H1 (cell line): ENCODE measurements at regions of chr6 and their contacts with region 1.

Region 1: DNA sequence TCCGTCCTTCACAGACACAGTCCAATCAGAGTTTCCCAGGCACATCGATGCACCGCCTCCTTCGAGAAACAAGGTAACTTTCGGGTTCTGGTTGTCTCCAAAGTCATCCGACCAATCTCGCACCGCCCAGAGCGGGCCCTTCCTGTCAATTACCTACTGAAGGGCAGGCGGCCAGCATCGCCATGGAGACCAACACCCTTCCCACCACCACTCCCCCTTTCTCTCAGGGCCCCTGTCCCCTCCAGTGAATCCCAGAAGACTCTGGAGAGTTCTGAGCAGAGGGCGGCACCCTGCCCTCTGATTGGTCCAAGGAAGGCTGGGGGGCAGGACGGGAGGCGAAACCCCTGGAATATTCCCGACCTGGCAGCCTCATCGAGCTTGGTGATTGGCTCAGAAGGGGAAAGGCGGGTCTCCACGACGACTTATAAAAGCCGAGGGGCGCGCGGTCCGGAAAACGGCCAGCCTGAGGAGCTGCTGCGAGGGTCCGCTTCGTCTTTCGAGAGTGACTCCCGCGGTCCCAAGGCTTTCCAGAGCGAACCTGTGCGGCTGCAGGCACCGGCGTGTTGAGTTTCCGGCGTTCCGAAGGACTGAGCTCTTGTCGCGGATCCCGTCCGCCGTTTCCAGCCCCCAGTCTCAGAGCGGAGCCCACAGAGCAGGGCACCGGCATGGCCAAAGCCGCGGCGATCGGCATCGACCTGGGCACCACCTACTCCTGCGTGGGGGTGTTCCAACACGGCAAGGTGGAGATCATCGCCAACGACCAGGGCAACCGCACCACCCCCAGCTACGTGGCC is at the start of gene HSPA1B:
- DNase-seq: peak; percentile 98
- H3K4me3 ChIP-seq: peak within 1 kb of the TSS; percentile 55 to 75 (median 72)
- H3K27ac ChIP-seq: peak within 1 kb of the TSS; percentile 77
- H3K4me1 ChIP-seq: peaks cover 5 to 12% (median 9%) of the 10 kb centered on the region in 4 experiments; a peak in 6 of 7 replicates
- H3K27me3 ChIP-seq: no peaks in the 10 kb centered on the region
- CTCF ChIP-seq: no peak
- EP300 ChIP-seq: no peak
- POLR2A ChIP-seq: peak; percentile 99 to 100
- RAD21 ChIP-seq: no peak
- total RNA-seq, gene HSPA1B: 76.6 and 89.3 TPM in 2 replicates

Region 2: GRCh38 chr6:31614075-31614619 is 213.3 kb before region 1 on chr6:
- CTCF ChIA-PET with region 1: no interaction called
- POLR2A ChIA-PET with region 1: no interaction called
- DNase-seq: no peak
- H3K4me3 ChIP-seq: no peak overlapping the region
- H3K27ac ChIP-seq: no peak overlapping the region
- H3K4me1 ChIP-seq: peaks cover 2 to 12% (median 6%) of the 10 kb centered on the region in 4 experiments; a peak in 6 of 7 replicates
- H3K27me3 ChIP-seq: no peaks in the 10 kb centered on the region
- CTCF ChIP-seq: no peak
- EP300 ChIP-seq: no peak
- POLR2A ChIP-seq: no peak
- RAD21 ChIP-seq: no peak

Region 3: GRCh38 chr6:31680840-31681671 is 146.4 kb before region 1 on chr6 and contains the start of gene LY6G5C:
- CTCF ChIA-PET with region 1: interaction called, 11 read pairs
- POLR2A ChIA-PET with region 1: interaction called, 4 read pairs
- DNase-seq: peak in 1 of 2 experiments; percentile 79
- H3K4me3 ChIP-seq: peak within 1 kb of the TSS; percentile 22 to 70 (median 60)
- H3K27ac ChIP-seq: no peak within 1 kb of the TSS
- H3K4me1 ChIP-seq: peaks cover 0 to 10% (median 7%) of the 10 kb centered on the region in 4 experiments; a peak in 5 of 7 replicates
- H3K27me3 ChIP-seq: peaks cover 3 to 13% (median 12%) of the 10 kb centered on the region in 4 experiments; a peak in 6 of 7 replicates
- CTCF ChIP-seq: peak; percentile 78 to 85 (median 83)
- EP300 ChIP-seq: no peak
- POLR2A ChIP-seq: no peak
- RAD21 ChIP-seq: peak; percentile 90 to 96
- total RNA-seq, gene LY6G5C: 1.1 and 1.2 TPM in 2 replicates

Region 4: DNA sequence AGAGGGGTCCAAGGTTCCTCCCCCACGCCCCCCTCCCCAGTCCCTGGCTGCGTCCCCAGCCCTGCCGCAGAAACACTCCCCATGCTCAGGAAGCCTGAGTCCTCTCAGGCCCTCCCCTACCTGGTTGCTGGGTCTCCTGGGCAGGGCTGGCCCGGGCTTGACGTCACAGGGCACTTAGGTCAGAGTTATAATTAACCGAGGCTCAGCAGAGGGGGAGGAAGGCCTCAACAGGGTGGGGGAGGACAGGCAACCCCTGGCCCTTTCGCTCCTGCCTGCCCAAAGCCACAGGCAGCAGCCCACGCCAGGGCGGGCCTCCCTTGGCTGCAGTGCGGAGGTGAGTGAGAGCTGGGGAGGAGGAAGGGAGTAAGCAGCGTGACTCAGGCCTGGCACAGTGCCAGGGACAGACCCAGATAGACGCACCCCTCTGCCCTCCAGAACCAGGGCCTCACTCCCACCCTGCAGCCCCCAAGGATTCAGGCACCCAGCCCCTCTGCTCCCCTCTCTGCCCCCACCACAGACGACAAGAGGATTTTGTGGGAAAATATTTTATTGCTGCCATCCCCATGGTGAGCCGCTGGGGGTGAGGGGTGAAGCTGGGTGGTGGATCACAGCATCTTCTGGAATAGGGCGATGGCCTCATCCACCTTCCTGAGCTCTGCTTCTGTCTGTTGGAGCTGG is 50.4 kb before region 1 on chr6 and contains the start of gene VWA7:
- CTCF ChIA-PET with region 1: interaction called, 16 read pairs
- POLR2A ChIA-PET with region 1: interaction called, 10 read pairs
- DNase-seq: peak in 1 of 2 experiments; percentile 63
- H3K4me3 ChIP-seq: no peak within 1 kb of the TSS
- H3K27ac ChIP-seq: peak within 1 kb of the TSS; percentile 26; the same call in 1 of the 2 replicates
- H3K4me1 ChIP-seq: peaks cover 0 to 7% (median 3%) of the 10 kb centered on the region in 4 experiments; a peak in 4 of 7 replicates
- H3K27me3 ChIP-seq: no peaks in the 10 kb centered on the region; a peak in 1 of 7 replicates
- CTCF ChIP-seq: no peak
- EP300 ChIP-seq: no peak
- POLR2A ChIP-seq: 0 out of 3 replicates have a peak, but pooled peaks of 1 of the 2 experiments have one; percentile 19
- RAD21 ChIP-seq: no peak
- total RNA-seq, gene VWA7: 1.5 and 2.1 TPM in 2 replicates

Region 5: DNA sequence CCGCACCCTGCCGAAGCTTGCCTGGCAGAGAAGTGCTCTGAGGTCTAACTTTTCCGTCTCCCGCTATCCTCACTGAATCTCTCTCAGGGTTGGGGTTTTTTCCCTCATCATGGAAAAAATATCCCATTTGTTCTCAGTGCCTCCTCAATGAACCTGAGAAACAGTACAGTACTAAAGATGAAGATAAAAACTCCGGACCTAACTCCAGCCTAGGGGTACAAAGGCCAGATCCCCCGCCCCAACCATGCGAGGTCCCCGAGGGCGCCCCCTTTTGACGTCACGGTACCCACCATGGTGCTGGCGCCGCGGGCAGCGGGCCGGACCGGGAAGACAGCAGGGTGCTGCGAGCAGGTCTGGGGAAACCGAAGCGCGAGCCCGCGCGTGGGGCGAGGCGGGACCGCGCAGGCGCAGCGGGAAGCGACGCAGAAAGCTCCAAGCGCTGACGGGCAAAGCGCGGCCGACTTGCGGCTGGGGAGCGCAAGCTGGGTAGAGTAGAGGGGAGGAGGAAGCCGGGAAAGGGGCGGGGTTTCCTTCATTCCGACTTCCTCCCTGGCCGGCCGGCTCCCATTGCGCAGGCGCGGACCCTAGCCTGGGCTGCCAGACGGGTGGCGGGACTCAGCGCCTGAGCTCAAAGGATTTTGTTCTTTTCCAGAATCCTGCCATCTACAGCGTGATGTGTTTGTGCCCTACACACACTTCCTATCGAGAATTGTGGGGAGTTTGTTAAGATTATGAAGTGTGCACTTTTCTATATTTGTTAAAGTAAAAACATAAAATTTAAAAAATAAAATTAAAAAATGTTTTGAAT is 20.8 kb before region 1 on chr6 and contains the start of gene LSM2:
- CTCF ChIA-PET with region 1: interaction called, 21 read pairs
- POLR2A ChIA-PET with region 1: interaction called, 119 read pairs
- DNase-seq: peak in 1 of 2 experiments; percentile 99
- H3K4me3 ChIP-seq: peak within 1 kb of the TSS; percentile 76 to 96 (median 86)
- H3K27ac ChIP-seq: peak within 1 kb of the TSS; percentile 91
- H3K4me1 ChIP-seq: peaks cover 0 to 2% (median 0%) of the 10 kb centered on the region in 4 experiments; a peak in 1 of 7 replicates
- H3K27me3 ChIP-seq: no peaks in the 10 kb centered on the region
- CTCF ChIP-seq: no peak
- EP300 ChIP-seq: no peak
- POLR2A ChIP-seq: peak; percentile 58 to 69
- RAD21 ChIP-seq: 0 out of 4 replicates have a peak, but pooled peaks have one; percentile 1 to 8
- total RNA-seq, gene LSM2: 127 and 132 TPM in 2 replicates

Region 6: DNA sequence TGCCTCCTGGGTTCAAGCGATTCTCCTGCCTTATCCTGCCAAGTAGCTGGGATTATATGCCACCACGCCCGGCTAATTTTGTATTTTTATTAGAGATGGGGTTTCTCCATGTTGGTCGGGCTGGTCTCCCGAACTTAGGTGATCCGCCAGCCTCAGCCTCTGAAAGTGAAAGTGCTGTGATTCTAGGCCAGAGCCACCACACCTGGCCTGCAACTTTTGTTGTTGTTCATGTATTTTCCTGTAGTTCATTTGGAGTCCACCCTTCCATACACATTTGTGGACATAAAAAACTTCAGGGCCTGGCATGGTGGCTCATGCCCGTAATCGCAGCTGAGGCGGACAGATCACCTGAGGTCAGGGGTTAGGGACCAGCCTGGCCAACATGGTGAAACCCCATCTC is 14.6 kb after region 1 on chr6:
- CTCF ChIA-PET with region 1: interaction called, 5 read pairs
- POLR2A ChIA-PET with region 1: interaction called, 189 read pairs
- DNase-seq: no peak
- H3K4me3 ChIP-seq: no peak overlapping the region
- H3K27ac ChIP-seq: no peak overlapping the region
- H3K4me1 ChIP-seq: peaks cover 2 to 8% (median 5%) of the 10 kb centered on the region in 4 experiments; a peak in 4 of 7 replicates
- H3K27me3 ChIP-seq: no peaks in the 10 kb centered on the region
- CTCF ChIP-seq: no peak
- EP300 ChIP-seq: no peak
- POLR2A ChIP-seq: no peak
- RAD21 ChIP-seq: no peak

Region 7: DNA sequence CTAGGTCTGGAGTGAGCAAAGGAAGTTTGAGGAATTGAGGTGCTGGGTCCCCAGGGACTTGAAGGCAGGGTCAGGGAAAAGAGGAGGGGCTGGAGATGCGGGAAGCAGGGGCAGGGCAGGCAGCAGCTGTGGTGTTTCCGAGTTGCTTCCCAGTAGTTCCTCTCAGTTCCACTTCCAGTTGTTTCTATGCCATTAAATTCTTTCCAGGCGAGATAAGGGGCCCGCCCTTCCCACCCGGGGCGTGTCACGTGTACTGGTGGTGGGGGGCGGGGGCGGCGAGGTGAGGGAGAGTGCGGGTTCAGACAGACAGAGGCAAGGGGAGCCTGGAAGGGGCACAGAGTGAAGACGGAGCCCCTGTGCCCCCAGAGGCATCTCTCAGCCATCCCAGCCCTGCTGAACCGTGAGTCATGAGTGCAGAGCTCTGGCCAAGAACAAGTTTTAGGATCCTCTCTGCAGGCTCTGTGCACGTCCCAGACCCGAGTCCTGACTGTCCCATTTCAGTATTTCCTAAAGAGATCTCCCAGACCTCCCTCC is 280.7 kb after region 1 on chr6:
- CTCF ChIA-PET with region 1: no interaction called
- POLR2A ChIA-PET with region 1: no interaction called
- DNase-seq: no peak
- H3K4me3 ChIP-seq: peak overlapping the region in 3 of 4 experiments; percentile 5 to 9 (median 9); a peak in 3 of 8 replicates
- H3K27ac ChIP-seq: no peak overlapping the region
- H3K4me1 ChIP-seq: peaks cover 2 to 13% (median 7%) of the 10 kb centered on the region in 4 experiments
- H3K27me3 ChIP-seq: peaks cover 0 to 11% (median 6%) of the 10 kb centered on the region in 4 experiments; a peak in 5 of 7 replicates
- CTCF ChIP-seq: no peak
- EP300 ChIP-seq: no peak
- POLR2A ChIP-seq: no peak
- RAD21 ChIP-seq: no peak

Region 8: DNA sequence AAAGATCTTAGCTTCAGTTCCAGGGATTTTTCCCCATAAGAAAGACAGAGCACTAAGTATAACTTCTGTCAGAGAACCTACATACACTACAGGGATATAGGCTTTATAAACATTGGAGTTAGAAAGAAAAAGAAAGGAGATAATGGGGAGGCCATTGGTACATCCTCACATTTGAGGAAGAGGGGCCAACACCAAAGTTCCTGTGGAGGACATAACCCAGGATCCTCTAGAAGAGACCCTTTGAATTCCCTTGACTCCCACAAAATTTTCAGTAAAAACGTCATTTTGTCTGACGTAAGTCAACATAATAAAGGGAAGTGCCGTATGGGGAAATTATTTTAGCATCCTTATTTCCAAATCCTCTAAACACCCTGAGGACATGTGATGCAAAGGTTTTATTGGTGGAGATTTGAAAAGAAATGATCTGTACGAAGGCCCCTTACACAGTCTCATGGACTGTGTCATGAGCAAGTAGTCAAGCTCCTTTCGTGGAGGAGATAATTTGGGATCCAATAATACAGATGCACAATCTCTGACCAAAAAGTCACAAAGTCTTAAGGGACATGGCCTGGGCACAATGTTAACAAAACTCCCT is 645.4 kb after region 1 on chr6:
- CTCF ChIA-PET with region 1: no interaction called
- POLR2A ChIA-PET with region 1: no interaction called
- DNase-seq: no peak
- H3K4me3 ChIP-seq: no peak overlapping the region
- H3K27ac ChIP-seq: no peak overlapping the region
- H3K4me1 ChIP-seq: peaks cover 0 to 2% (median 0%) of the 10 kb centered on the region in 4 experiments; a peak in 1 of 7 replicates
- H3K27me3 ChIP-seq: no peaks in the 10 kb centered on the region
- CTCF ChIP-seq: no peak
- EP300 ChIP-seq: no peak
- POLR2A ChIP-seq: no peak
- RAD21 ChIP-seq: no peak